Activated T-helper 2 cell treated with anti-CD3 and anti-CD28 coated beads, Interferon-gamma antibody, Interleukin-2, Interleukin-4, amounts not matched to agents 10 μg/mL and 5 μg/mL and 100 μg/mL, durations not matched to agents 14 hours and 24 hours and 36 hours (primary cell): ENCODE measurements at regions of chr3 and their contacts with region 1.

Region 1: DNA sequence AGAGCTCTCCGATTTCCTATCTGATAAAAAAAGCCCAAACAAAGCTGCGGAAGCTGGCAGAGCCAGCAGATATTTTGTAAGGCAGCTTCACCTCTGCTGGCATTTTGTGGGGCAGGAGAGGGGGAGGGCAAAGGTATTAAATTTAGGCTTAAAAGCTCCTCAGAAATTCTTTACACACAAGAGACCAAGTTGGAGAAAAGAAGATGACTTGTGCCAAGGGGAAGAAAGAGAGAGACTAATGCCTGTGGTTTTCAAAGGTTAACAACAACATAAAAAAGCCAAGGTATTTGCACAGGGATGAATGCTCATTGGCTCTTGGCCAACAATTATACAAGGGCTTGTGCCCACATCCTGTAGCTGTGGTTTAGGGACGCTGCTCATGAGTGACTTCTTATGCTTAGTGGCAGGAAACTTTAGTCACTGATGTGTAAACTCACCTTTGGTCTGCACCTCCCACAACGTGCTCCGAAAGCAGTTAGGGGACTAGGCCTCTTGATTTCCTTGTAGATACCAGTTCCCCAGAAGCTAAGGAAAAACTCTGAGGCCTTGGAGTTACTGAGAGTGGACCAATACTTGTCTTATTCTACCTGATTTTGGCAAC is 152.9 kb downstream of the TPRG1 start:
- DNase-seq: peak; percentile 88
- H3K4me3 Mint-ChIP-seq: peak overlapping the region; percentile 82
- H3K27ac Mint-ChIP-seq: peak overlapping the region; percentile 100
- H3K4me1 Mint-ChIP-seq: peaks cover 83% of the 10 kb centered on the region
- H3K27me3 Mint-ChIP-seq: no peaks in the 10 kb centered on the region

Region 2: DNA sequence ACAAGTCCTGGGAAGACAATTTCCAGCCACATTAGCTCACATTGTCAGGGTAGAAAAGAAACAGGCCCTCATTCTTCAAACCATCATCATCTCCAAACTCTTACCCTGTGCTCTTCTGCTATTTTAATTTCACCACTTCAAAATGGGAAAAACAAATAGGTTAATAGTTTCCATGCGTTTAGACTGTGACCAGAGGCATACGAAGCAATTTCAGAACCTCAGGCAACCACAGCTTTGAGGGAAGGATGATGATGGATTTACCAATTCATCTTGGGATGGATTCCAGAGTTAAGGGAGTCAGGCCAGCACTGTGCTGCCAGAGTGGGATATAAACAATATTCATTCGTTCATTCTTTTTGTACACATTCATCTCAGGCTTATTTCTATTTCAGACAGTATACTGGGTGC is 460.6 kb before region 1 on chr3:
- intact Hi-C with region 1: no loop called
- DNase-seq: no peak
- H3K4me3 Mint-ChIP-seq: no peak overlapping the region
- H3K27ac Mint-ChIP-seq: no peak overlapping the region
- H3K4me1 Mint-ChIP-seq: peaks cover 5% of the 10 kb centered on the region
- H3K27me3 Mint-ChIP-seq: no peaks in the 10 kb centered on the region

Region 3: DNA sequence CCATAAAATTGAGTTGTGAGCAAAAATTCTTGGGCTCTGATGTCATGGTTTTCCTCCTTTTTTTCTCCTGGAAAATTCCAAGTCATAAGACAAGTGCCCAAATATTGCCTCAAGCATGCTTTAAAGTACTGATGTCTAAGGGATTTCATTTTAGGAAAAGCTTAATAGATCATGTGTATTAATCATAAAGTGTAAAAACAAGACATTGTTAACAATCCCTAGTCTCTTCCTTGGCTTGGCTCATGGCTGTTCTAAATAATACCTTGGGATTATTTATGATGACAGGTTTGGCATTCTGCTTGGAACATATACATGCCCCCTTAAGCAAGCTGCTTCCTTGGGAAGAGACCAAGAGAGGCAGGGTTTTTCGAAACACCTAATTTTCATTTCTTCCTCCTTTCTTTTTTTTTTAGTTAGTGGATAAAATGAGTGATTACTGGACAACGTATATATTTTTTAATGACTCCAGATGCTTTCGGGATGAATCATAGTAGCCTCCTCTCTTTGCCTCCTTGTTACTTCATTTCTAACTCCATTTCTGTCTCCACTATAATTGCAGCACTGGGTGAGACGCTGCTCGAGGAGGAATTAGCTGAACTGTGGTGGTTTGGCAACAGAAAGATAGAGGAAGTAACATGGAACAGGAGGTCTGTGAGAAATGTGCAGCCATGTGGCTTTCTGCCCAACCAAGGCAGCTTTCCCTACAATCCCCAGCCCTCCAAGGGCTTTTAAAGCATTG is 48.0 kb before region 1 on chr3:
- intact Hi-C with region 1: loop called (anchors 2 kb)
- DNase-seq: no peak
- H3K4me3 Mint-ChIP-seq: no peak overlapping the region
- H3K27ac Mint-ChIP-seq: peak overlapping the region; percentile 44
- H3K4me1 Mint-ChIP-seq: peaks cover 52% of the 10 kb centered on the region
- H3K27me3 Mint-ChIP-seq: no peaks in the 10 kb centered on the region

Region 4: GRCh38 chr3:189288348-189289235 is 36.0 kb before region 1 on chr3:
- intact Hi-C with region 1: loop called (anchors 1 kb)
- DNase-seq: no peak
- H3K4me3 Mint-ChIP-seq: peak overlapping the region; percentile 45
- H3K27ac Mint-ChIP-seq: peak overlapping the region; percentile 88
- H3K4me1 Mint-ChIP-seq: peaks cover 43% of the 10 kb centered on the region
- H3K27me3 Mint-ChIP-seq: no peaks in the 10 kb centered on the region

Region 5: GRCh38 chr3:189394599-189395121 is 70.0 kb after region 1 on chr3:
- intact Hi-C with region 1: loop called (anchors 2 kb)
- DNase-seq: no peak
- H3K4me3 Mint-ChIP-seq: peak overlapping the region; percentile 6
- H3K27ac Mint-ChIP-seq: peak overlapping the region; percentile 84
- H3K4me1 Mint-ChIP-seq: peaks cover 40% of the 10 kb centered on the region
- H3K27me3 Mint-ChIP-seq: no peaks in the 10 kb centered on the region

Region 6: DNA sequence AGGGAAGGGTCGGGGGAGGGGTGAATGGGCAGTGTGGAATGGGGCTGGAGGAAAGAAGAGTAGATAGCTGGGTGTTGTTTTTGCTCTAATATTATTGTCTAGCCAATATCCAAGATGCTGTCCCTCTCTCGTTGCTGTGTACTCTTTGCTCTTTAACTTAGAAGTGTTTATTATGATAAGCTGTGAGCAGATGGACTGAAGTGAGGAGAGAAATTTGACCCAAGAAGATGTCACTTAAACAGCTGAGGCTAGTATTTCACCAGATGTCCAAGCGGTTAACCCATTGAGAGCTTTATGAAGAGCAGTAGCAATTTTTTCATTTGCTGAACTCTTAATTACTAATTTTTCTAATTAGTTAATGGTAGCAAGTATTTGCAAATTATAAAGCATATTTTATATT is 94.4 kb after region 1 on chr3:
- intact Hi-C with region 1: loop called (anchors 1 kb)
- DNase-seq: no peak
- H3K4me3 Mint-ChIP-seq: no peak overlapping the region
- H3K27ac Mint-ChIP-seq: no peak overlapping the region
- H3K4me1 Mint-ChIP-seq: peaks cover 37% of the 10 kb centered on the region
- H3K27me3 Mint-ChIP-seq: no peaks in the 10 kb centered on the region

Region 7: GRCh38 chr3:189502676-189503257 is 178.1 kb after region 1 on chr3:
- intact Hi-C with region 1: loop called (anchors 1 kb)
- DNase-seq: no peak
- H3K4me3 Mint-ChIP-seq: no peak overlapping the region
- H3K27ac Mint-ChIP-seq: peak overlapping the region; percentile 30
- H3K4me1 Mint-ChIP-seq: peaks cover 41% of the 10 kb centered on the region
- H3K27me3 Mint-ChIP-seq: no peaks in the 10 kb centered on the region

Region 8: GRCh38 chr3:189947948-189948723 is 623.5 kb after region 1 on chr3:
- intact Hi-C with region 1: loop called (anchors 5 kb)
- DNase-seq: no peak
- H3K4me3 Mint-ChIP-seq: no peak overlapping the region
- H3K27ac Mint-ChIP-seq: no peak overlapping the region
- H3K4me1 Mint-ChIP-seq: peaks cover 18% of the 10 kb centered on the region
- H3K27me3 Mint-ChIP-seq: peaks cover 10% of the 10 kb centered on the region